Cardiac septum (tissue), 1 donor: ENCODE measurements at regions of chr3 and their contacts with region 1.

Region 1: GRCh38 chr3:24521420-24522145 is 26.9 kb upstream of the THRB start:
- DNase-seq: peak; percentile 78

Region 2: DNA sequence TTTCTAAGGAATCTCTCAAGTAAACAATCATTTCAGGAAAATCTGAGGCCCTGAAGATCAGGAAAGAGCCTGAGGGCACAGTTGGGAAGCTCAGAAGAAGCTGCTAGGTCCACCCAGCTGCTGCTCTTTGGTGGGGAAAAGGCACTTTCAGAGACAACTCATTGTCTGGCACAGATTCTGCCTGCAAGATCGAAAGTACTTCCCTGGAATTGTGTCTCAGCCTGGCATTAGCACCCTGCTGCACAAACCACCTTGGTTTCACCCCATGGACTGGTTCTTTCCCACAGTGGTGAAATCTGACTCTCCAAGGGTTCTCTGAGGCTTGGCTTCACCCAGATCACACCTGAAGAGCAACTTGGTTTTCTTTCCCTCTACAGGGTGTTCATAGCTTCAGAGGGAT is 45.7 kb before region 1 on chr3:
- intact Hi-C with region 1: no loop called
- DNase-seq: no peak

Region 3: DNA sequence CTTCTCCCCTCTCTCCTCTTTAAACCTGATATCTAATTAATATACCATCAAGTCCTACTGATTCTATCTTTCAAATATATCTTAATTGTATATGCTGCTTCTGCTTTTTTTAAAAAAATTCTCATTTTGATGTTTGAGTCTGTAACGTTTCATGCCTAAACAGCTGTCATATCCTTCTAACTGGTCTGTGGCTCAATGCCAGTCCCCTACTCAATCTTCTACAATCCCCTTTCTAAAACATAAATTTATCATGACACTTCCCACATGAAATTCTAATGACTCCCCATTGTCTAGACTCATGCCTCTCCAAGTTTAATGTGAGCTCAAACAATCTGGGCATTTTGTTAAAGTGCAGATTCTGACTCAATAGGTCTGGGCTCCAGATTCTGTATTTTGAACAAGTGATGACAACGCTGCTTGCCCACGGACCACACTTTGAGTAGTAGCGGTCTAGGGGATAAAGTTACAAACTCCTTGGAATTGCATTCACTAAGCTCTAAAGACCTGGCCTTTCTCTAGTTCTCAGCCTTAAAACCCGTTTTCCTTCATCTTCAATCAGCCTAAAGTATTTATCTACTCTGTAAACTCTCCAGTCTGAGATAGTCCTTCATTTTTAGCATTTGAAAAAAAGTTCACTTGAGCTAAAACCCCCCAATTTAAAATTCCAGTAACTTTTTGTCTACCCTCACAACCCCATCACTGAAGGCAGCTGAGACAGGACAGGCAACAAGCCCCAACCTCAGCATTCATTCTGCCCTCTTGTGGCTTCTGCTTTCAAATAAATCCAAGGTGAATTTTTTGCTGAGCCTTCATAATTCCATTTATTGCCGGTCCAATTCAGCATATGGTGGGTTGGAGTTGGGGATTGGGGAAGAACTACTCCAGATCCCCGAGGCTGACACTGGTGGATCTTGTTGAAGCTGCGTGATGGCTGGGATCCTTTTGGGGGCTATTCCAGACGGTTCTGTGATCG is 61.1 kb after region 1 on chr3:
- intact Hi-C with region 1: loop called (anchors 5 kb)
- DNase-seq: no peak